IMR-90 (cell line): ENCODE measurements at regions of chr2 and their contacts with region 1.

Region 1: DNA sequence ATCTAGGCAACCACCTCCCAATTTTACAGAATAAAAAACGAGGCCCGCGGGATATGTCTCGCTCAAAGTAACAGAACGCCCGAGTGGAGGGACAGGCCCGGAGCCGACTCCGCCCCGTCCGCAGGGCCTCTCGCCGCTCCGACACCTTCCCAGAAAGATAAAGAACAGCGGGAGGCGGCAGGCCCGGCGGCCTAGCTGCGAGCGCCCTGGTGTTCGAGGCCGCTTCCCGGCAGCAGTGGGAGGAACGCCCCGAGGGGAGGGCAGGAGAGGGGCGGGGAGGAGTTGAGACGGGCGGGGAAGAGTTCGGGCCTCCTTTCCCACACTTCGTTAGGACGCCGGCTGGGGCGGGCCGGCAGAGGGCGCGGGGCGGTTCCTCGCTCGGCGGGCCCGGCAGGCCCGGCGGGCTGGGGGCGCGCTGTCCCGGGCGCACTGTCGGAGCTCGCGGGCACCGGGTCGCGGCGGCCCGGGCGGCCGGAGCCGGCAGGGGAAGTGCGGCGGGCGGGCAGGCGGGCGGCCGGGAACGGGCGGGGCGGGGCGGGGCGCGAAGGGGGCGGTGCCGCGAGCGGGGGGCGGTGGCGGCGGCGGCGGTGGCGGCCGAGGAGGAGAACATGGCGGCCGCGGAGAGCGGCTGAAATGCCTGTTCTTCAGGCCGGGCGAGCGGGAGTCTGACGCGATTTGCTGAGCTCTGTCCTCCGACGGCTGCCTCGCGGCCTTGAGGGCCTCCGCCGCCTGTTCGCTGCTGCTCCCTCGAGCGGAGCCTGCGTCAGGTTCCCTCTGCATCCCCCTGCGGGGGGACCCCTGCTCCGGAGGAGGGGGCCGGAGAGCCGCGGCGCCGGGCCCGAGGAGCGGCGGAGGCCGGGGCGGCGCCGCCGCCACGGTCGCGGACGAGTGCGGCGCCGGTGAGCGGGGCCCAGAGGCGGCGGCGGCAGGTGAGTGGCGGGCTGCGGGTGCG is at the start of gene NCOA1:
- DNase-seq: peak; percentile 85
- ATAC-seq: peak; percentile 90
- H3K4me3 ChIP-seq: peak within 1 kb of the TSS; percentile 94
- H3K27ac ChIP-seq: peak within 1 kb of the TSS; percentile 100
- H3K4me1 ChIP-seq: peaks cover 7% of the 10 kb centered on the region
- H3K27me3 ChIP-seq: no peaks in the 10 kb centered on the region
- CTCF ChIP-seq: peak; percentile 26; the same call in 1 of the 2 replicates
- POLR2A ChIP-seq: peak; percentile 35; the same call in 1 of the 2 replicates
- RAD21 ChIP-seq: no peak
- total RNA-seq, gene NCOA1: 11.3 and 13.1 TPM in 2 replicates

Region 2: GRCh38 chr2:24421668-24422067 is 69.3 kb before region 1 on chr2:
- CTCF ChIA-PET with region 1: interaction called, 3 read pairs
- POLR2A ChIA-PET with region 1: no interaction called
- dilution Hi-C with region 1: no loop called
- in situ Hi-C with region 1: no loop called
- intact Hi-C with region 1: loop called (anchors 5 kb)
- DNase-seq: peak; percentile 24
- ATAC-seq: peak; percentile 74
- H3K4me3 ChIP-seq: no peak overlapping the region
- H3K27ac ChIP-seq: no peak overlapping the region
- H3K4me1 ChIP-seq: no peaks in the 10 kb centered on the region
- H3K27me3 ChIP-seq: peaks cover 7% of the 10 kb centered on the region
- CTCF ChIP-seq: peak; percentile 55
- POLR2A ChIP-seq: no peak
- RAD21 ChIP-seq: peak; percentile 67

Region 3: GRCh38 chr2:24792874-24793760 is 302.2 kb after region 1 on chr2 and contains the starts of genes CENPO and PTRHD1:
- CTCF ChIA-PET with region 1: no interaction called
- POLR2A ChIA-PET with region 1: no interaction called
- dilution Hi-C with region 1: no loop called
- in situ Hi-C with region 1: no loop called
- intact Hi-C with region 1: loop called (anchors 5 kb)
- DNase-seq: peak; percentile 96
- ATAC-seq: peak; percentile 98
- H3K4me3 ChIP-seq: peak within 1 kb of the TSS; percentile 75
- H3K27ac ChIP-seq: peak within 1 kb of the TSS; percentile 96
- H3K4me1 ChIP-seq: peaks cover 2% of the 10 kb centered on the region
- H3K27me3 ChIP-seq: no peaks in the 10 kb centered on the region
- CTCF ChIP-seq: peak; percentile 60
- POLR2A ChIP-seq: peak; percentile 79; the same call in 1 of the 2 replicates
- RAD21 ChIP-seq: peak; percentile 48
- total RNA-seq, gene CENPO: 24.2 and 27.2 TPM in 2 replicates
- total RNA-seq, gene PTRHD1: 11.7 and 17.2 TPM in 2 replicates